A673 (cell line): ENCODE measurements at regions of chr7 and their contacts with region 1.

Region 1: DNA sequence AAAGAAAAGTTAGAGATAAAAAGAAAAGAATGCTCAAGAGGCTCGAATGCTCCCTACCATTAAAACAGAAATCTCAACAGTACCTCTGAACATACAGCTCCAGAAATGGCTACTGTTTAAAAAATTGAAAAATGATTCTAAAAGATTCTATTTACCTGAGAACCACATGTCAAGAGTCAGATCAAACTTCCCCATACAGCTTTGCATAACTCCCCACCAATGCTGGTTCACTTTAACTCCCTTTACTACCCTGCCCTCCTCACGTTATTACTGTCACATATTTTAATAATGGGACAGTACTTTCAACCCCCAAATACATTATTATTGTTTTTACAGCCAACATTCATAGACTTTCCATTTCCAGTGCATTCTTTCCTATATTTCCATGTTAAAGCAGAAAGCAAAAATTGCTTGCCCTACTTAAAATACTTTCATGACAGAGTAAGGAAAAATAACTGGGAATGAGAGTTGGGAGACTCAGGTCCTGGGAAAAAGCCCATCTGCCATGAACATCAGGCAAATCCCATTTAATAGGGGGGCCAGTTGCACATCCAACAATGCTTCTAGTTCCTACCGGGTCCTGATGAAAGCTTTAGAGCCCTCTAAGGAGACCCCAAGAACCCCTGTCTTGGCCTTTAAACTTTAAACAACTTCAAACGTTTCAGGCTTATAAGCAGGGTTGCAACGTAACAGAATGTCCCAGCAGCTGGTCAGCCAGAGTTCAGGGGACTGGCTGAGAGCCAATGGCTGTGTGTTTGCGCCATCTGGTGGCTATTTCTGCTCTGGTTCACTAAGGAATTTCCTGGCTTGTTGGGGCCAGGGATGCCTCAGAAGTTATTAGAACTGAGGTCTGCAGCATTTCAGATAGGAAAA is 247.4 kb downstream of the ELMO1 start:
- DNase-seq: peak; percentile 49
- H3K4me3 ChIP-seq: no peak overlapping the region
- H3K27ac ChIP-seq: no peak overlapping the region
- H3K4me1 ChIP-seq: no peaks in the 10 kb centered on the region
- H3K27me3 ChIP-seq: no peaks in the 10 kb centered on the region
- CTCF ChIP-seq: peak; percentile 83

Region 2: DNA sequence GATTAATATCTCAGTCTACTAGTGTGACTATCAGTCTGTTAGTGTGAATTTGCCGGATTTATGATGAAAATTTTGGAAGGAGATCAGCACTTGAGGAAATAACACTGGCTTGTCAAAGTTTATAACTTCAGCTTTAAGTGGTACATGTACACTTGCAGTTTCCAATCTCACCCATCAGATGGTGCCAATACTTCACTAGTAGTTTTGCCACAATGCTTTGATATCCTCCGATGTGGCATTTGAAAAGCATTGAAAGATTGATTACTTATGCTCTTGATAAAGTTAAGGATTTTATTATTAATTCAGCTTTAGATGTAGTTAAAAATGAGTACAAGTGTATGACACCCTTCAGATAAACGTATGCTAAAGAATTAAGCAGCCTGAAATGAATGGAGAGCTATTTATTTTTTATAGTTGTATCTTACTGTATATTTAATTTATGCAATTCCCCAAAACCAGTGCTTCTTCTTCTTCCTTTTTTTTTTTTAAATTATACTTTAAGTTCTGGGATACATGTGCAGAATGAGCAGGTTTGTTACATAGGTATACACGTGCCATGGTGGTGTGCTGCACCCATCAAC is 713.4 kb before region 1 on chr7:
- CTCF ChIA-PET with region 1: interaction called, 10 read pairs
- POLR2A ChIA-PET with region 1: no interaction called
- intact Hi-C with region 1: loop called (anchors 5 kb)
- DNase-seq: peak; percentile 67
- H3K4me3 ChIP-seq: no peak overlapping the region
- H3K27ac ChIP-seq: no peak overlapping the region
- H3K4me1 ChIP-seq: no peaks in the 10 kb centered on the region
- H3K27me3 ChIP-seq: peaks cover 50% of the 10 kb centered on the region
- CTCF ChIP-seq: peak; percentile 74

Region 3: GRCh38 chr7:36895192-36895591 is 306.0 kb before region 1 on chr7:
- CTCF ChIA-PET with region 1: no interaction called
- POLR2A ChIA-PET with region 1: no interaction called
- intact Hi-C with region 1: loop called (anchors 10 kb)
- DNase-seq: no peak
- H3K4me3 ChIP-seq: no peak overlapping the region
- H3K27ac ChIP-seq: no peak overlapping the region
- H3K4me1 ChIP-seq: no peaks in the 10 kb centered on the region
- H3K27me3 ChIP-seq: no peaks in the 10 kb centered on the region
- CTCF ChIP-seq: no peak

Region 4: DNA sequence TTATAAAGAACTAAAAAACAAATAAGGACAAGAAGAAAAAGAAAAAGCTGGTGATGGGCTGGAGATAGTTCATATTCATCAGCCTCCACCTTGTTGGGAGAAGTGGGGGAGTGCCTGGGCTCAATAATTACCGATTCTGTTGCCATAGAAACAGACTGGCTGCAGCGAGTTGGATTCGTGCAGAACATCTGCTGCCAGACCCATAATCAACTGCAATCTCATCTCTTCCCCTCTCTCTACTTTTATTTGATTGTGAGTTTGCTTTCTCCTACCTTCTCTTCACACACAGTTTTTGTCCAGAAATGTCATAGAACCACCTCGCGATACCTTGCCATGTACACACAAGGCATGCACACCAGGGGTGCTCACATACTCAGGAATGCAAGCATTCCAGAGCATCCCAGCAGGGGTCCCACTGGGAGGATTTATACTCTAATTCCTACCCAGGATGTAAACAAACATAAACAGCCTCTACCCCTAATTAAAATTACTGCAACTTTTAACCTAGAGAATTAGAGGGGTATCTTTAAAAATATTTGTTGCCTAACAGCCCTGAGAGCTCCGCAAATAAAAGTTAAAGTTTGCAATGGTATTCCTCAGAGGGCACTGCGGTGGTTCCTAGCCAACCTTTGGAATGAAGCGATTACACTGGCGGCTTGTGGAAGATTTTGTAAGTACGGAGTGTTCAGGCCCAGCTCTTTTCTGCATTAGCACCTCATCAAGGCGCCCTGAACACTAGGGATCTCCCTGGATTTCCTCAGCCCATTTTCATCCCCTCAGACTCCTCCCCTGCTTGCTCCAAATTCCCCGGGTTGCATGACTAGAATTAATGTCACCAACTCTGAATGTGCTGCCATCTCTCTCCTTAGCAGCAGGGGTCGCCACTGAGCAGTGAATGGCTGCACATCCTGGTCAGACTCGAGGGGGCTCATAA is 214.5 kb before region 1 on chr7:
- CTCF ChIA-PET with region 1: interaction called, 3 read pairs
- POLR2A ChIA-PET with region 1: no interaction called
- intact Hi-C with region 1: loop called (anchors 5 kb)
- DNase-seq: peak; percentile 77
- H3K4me3 ChIP-seq: no peak overlapping the region
- H3K27ac ChIP-seq: no peak overlapping the region
- H3K4me1 ChIP-seq: no peaks in the 10 kb centered on the region
- H3K27me3 ChIP-seq: no peaks in the 10 kb centered on the region
- CTCF ChIP-seq: peak; percentile 94

Region 5: GRCh38 chr7:37162106-37162505 is 39.1 kb before region 1 on chr7:
- CTCF ChIA-PET with region 1: no interaction called
- POLR2A ChIA-PET with region 1: no interaction called
- intact Hi-C with region 1: no loop called
- DNase-seq: no peak
- H3K4me3 ChIP-seq: no peak overlapping the region
- H3K27ac ChIP-seq: no peak overlapping the region
- H3K4me1 ChIP-seq: no peaks in the 10 kb centered on the region
- H3K27me3 ChIP-seq: no peaks in the 10 kb centered on the region
- CTCF ChIP-seq: no peak